Right ventricle myocardium inferior (tissue), 1 donor: ENCODE measurements at regions of chr11 and their contacts with region 1.

Region 1: DNA sequence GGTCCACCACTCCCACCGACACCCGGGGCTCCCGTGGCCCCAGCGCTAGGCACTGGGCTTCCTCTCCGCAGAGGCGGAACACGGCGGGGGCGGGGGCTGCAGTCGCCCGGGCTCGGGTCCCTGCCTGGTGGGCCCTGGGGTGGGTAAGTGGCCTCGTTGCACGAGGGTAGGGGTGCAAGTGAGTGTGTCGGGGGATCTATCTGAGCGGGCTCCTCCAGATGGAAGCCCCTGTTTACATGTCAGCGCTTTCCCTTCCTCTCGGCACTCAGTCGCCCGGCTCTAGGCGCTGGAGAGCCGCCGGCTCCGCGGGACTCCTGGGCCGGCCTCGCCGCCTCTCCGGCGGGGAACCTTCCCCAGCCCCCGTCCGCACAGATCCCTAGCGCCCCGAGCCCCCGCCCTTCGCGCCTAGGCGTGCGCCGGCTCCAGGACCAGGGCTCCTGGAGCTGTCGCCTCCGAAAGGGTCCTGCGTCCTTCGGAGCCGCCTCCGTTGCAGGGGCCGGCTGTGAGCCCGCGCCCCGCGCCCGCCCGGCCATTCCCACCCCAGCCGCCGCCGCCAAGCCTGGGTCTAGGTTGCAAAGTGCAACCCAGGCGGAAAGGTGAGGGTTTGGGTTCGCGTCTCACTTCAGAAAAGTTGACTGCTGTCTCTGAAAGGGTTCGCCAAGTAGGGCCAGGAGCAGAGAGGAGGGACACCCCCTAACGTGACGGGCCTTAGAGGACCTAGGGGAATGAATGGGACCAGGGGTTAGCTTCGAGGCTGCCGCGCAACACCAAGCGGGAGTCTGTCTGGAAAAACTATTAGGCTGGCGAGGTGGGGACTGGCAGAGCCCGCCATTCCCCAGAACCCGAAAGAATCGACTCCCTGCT is 978 bp downstream of the FLI1 start:
- DNase-seq: peak; percentile 76
- ATAC-seq: peak; percentile 18

Region 2: GRCh38 chr11:128481135-128481534 is 213.7 kb before region 1 on chr11:
- intact Hi-C with region 1: no loop called
- DNase-seq: no peak
- ATAC-seq: peak; percentile 63

Region 3: GRCh38 chr11:128709402-128709801 is 14.6 kb after region 1 on chr11:
- intact Hi-C with region 1: loop called (anchors 2 kb)
- DNase-seq: no peak
- ATAC-seq: no peak

Region 4: GRCh38 chr11:128776424-128777284 is 81.8 kb after region 1 on chr11:
- intact Hi-C with region 1: loop called (anchors 5 kb)
- DNase-seq: peak; percentile 82
- ATAC-seq: peak; percentile 82